ENCODE measurements at regions of chr5 and their contacts with region 1.

Region 1: DNA sequence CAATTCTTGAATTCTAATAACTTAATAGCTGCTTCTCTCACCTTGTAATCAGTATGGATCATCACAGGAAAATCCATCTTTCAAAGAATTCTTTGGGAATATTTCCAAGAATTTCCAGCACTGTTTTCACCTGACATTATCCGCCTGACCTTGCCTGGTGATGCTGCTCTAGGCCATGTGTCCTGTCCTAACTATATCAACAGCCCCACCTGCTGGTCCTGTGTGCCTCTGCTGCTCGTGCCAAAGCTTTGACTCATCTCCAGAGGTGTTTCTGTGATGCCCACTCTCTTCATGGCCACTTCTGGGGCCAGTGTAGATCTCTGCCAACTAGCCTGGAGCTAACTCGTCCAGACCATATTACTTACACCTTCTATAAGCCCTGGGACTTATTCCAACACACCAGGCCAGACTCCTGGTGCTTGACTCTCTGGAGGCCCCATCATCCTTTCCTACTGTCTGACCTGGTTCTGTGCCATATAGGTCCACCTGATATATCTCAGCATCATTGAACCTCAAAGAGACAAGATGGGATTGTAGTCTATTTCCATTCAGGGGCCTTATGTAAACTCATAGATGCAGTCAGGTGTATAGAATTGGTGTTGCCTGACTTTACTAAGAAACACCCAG is 67.5 kb upstream of the CKMT2 start:
- DNase-seq: peak; percentile 53
- H3K4me3 ChIP-seq: no peak overlapping the region
- H3K27ac ChIP-seq: no peak overlapping the region
- H3K4me1 ChIP-seq: no peaks in the 10 kb centered on the region
- H3K27me3 ChIP-seq: no peaks in the 10 kb centered on the region
- CTCF ChIP-seq: peak; percentile 90 to 93

Region 2: DNA sequence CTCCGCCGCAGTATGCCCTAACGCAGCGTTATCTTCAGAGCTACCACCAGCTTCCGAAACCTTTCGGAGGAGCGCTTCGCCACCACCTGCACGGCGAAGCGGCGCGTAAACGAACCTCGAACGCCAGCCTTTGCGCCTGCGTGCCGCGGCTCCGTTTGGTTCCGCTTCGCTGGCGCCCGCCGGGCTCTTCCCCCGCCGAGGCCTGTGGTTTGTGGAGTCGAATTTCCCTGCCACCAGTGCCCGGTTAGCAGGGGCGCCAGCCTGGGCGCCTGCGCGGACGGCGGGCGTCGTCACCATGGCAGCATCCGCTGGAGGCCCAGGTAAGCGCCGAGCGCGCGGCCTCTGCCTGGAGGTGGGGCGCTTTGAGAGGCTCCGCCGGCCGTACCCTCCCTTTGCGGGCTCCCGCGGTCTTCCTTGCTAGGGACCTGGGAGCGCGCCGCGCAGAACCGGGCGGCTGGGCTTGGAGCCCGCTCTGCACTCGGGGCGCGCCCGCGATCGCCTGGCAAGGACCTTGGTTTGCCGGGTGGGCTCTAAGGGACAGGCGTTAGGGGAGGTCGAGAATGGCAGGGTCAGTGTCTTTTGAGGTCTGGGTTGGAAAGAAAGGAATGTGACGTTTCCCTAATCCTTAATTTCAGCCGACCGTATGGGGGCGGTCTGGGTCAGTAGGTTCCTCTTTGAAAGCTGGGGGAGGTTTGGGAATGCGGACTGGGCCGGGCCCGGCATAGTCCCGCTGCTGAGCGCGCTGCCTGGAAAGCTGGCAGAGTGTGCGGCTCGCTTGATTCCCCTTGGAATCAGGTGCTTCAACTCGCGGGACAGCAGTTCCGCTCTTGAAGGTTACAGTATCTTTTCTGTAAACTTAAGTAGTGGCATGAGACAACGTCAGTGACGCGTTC is 677.5 kb before region 1 on chr5 and contains the start of gene FAM151B:
- CTCF ChIA-PET with region 1: no interaction called
- dilution Hi-C with region 1: no loop called
- in situ Hi-C with region 1: no loop called
- intact Hi-C with region 1: loop called (anchors 10 kb)
- DNase-seq: peak; percentile 98
- H3K4me3 ChIP-seq: peak within 1 kb of the TSS; percentile 69 to 73 (median 69)
- H3K27ac ChIP-seq: peak within 1 kb of the TSS; percentile 66
- H3K4me1 ChIP-seq: peaks cover 14% of the 10 kb centered on the region
- H3K27me3 ChIP-seq: no peaks in the 10 kb centered on the region
- CTCF ChIP-seq: peak in 1 of 2 donors; percentile 39
- total RNA-seq, gene FAM151B: 0.73 to 0.83 TPM

Region 3: GRCh38 chr5:80686757-80687156 is 478.8 kb before region 1 on chr5:
- CTCF ChIA-PET with region 1: no interaction called
- dilution Hi-C with region 1: no loop called
- in situ Hi-C with region 1: no loop called
- intact Hi-C with region 1: loop called (anchors 1 kb)
- DNase-seq: no peak
- H3K4me3 ChIP-seq: no peak overlapping the region
- H3K27ac ChIP-seq: no peak overlapping the region
- H3K4me1 ChIP-seq: no peaks in the 10 kb centered on the region
- H3K27me3 ChIP-seq: no peaks in the 10 kb centered on the region
- CTCF ChIP-seq: peak in 1 of 2 donors; percentile 29

Region 4: GRCh38 chr5:80711938-80712337 is 453.7 kb before region 1 on chr5:
- CTCF ChIA-PET with region 1: no interaction called
- dilution Hi-C with region 1: no loop called
- in situ Hi-C with region 1: no loop called
- intact Hi-C with region 1: loop called (anchors 1 kb)
- DNase-seq: peak; percentile 10
- H3K4me3 ChIP-seq: no peak overlapping the region
- H3K27ac ChIP-seq: no peak overlapping the region
- H3K4me1 ChIP-seq: no peaks in the 10 kb centered on the region
- H3K27me3 ChIP-seq: no peaks in the 10 kb centered on the region
- CTCF ChIP-seq: peak; percentile 38 to 57

Region 5: GRCh38 chr5:80804332-80804731 is 361.3 kb before region 1 on chr5:
- CTCF ChIA-PET with region 1: no interaction called
- dilution Hi-C with region 1: no loop called
- in situ Hi-C with region 1: no loop called
- intact Hi-C with region 1: loop called (anchors 10 kb)
- DNase-seq: peak; percentile 21
- H3K4me3 ChIP-seq: no peak overlapping the region
- H3K27ac ChIP-seq: no peak overlapping the region
- H3K4me1 ChIP-seq: peaks cover 3% of the 10 kb centered on the region
- H3K27me3 ChIP-seq: no peaks in the 10 kb centered on the region
- CTCF ChIP-seq: peak in 1 of 2 donors; percentile 25

Region 6: GRCh38 chr5:80935811-80936385 is 229.7 kb before region 1 on chr5:
- CTCF ChIA-PET with region 1: no interaction called
- dilution Hi-C with region 1: no loop called
- in situ Hi-C with region 1: no loop called
- intact Hi-C with region 1: loop called (anchors 10 kb)
- DNase-seq: no peak
- H3K4me3 ChIP-seq: no peak overlapping the region
- H3K27ac ChIP-seq: no peak overlapping the region
- H3K4me1 ChIP-seq: no peaks in the 10 kb centered on the region
- H3K27me3 ChIP-seq: peaks cover 3% of the 10 kb centered on the region
- CTCF ChIP-seq: peak; percentile 11 to 40

Region 7: DNA sequence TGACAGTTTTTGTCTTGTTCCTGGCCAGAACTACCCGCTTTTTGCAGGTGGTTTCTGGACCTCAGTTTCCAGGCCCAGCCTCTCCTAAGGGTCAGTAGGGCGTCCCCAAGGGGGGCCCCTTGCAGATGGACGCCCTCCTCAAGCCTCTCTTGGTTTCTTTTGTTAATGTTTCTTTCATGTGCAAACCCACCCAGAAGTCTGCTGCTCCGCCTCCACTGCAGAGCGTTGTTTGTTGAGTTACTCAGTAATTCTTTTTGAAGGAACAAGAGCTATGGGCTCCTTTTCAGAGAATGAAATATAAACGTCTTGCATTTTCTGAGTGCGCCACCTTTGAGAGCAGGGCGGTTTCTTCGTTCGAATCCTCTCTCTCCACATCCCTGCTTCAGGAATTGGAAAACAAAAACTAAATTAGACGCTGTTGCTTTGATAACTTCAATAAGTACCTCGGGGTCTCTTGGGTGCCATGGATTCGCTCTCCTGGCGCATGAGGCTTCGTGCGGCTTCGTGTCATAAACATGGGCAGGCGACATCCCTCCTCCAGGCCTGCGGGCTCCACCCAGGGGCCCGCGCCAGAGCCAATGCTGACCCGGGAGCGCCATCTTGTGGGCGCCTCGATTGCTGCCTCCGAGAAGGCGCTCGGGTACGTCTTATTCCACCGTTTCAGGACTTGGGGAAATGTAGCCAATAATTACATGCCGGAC is 29.2 kb after region 1 on chr5:
- CTCF ChIA-PET with region 1: no interaction called
- dilution Hi-C with region 1: no loop called
- in situ Hi-C with region 1: no loop called
- intact Hi-C with region 1: loop called (anchors 2 kb)
- DNase-seq: peak; percentile 56
- H3K4me3 ChIP-seq: peak overlapping the region in 2 of 3 experiments; percentile 8 to 21
- H3K27ac ChIP-seq: no peak overlapping the region
- H3K4me1 ChIP-seq: no peaks in the 10 kb centered on the region
- H3K27me3 ChIP-seq: peaks cover 2% of the 10 kb centered on the region
- CTCF ChIP-seq: peak; percentile 78 to 96

Measured in mammary epithelial cell (primary cell).